ENCODE measurements at regions of chr4 and their contacts with region 1.

Region 1: GRCh38 chr4:48546336-48546735 is 56.3 kb downstream of the ZAR1 start:
- DNase-seq: peak; percentile 57

Region 2: DNA sequence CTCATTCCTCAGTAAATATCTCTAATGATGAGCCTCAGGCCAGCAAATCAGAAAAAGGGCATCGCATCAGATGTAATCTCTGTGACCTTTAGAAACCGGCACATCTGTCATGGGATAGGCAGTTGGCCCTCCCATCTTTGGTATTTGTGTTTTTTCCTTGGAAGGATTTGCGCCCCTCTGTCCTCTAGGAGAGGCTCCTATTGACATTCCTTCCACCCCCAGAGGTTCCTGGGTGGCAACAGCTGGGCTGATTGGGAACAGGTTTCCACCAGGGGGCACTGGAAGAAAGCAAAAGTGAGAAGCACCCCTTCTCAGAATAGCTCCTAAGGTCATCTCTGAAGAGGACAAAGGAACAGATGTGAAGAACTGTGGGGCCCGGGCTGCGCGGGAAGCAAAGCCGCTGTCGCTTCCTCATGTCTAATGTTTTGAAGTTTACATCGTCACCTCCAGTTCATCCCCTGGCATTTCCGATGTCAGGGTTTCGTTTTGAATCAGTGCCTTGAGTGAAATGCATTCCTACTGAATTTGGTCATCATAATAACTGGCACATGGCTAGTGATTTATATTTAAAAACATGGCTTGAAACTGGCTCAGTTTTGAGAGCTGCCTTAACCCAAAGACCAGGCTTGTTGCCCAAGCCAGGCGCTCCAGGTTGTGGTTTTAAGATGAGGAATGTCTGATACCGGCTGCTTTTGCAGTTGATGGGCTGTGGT is 418.5 kb before region 1 on chr4:
- in situ Hi-C with region 1: loop called (anchors 25 kb)
- DNase-seq: peak; percentile 86

Region 3: GRCh38 chr4:48315728-48316630 is 230.4 kb before region 1 on chr4:
- in situ Hi-C with region 1: loop called (anchors 25 kb)
- DNase-seq: peak; percentile 79

Region 4: GRCh38 chr4:49058306-49058705 is 512.0 kb after region 1 on chr4:
- in situ Hi-C with region 1: no loop called
- DNase-seq: no peak